ENCODE measurements at regions of chr1 and their contacts with region 1.

Region 1: DNA sequence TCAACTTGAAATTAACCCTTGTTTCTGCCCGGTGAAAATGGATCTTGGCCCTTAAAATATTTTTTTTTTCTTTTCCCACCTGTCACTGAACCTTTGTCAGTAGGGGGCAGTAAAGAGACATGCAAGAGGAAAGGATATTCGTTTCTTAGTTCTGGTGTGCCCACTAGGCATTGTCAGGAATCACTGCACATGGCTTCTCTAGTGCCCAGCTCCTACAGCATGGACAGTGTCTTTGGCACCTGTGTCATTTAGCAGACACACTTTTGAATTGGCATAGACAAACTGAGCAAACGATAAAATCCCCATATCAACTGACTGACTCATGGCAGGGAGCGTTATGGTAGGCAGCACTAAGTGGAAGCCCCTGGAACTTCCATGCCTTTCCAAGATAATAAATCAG is 1048.1 kb downstream of the BRINP3 start:
- DNase-seq: peak; percentile 71
- ATAC-seq: no peak
- H3K4me3 ChIP-seq: no peak overlapping the region
- H3K27ac ChIP-seq: no peak overlapping the region
- H3K4me1 ChIP-seq: peaks cover 3% of the 10 kb centered on the region
- H3K27me3 ChIP-seq: no peaks in the 10 kb centered on the region
- CTCF ChIP-seq: peak; percentile 69

Region 2: GRCh38 chr1:189275796-189276195 is 153.8 kb before region 1 on chr1:
- CTCF ChIA-PET with region 1: no interaction called
- POLR2A ChIA-PET with region 1: no interaction called
- intact Hi-C with region 1: no loop called
- DNase-seq: no peak
- ATAC-seq: no peak
- H3K4me3 ChIP-seq: no peak overlapping the region
- H3K27ac ChIP-seq: no peak overlapping the region
- H3K4me1 ChIP-seq: no peaks in the 10 kb centered on the region
- H3K27me3 ChIP-seq: no peaks in the 10 kb centered on the region
- CTCF ChIP-seq: no peak

Region 3: GRCh38 chr1:189463166-189463565 is 33.6 kb after region 1 on chr1:
- CTCF ChIA-PET with region 1: no interaction called
- POLR2A ChIA-PET with region 1: no interaction called
- intact Hi-C with region 1: no loop called
- DNase-seq: no peak
- ATAC-seq: no peak
- H3K4me3 ChIP-seq: no peak overlapping the region
- H3K27ac ChIP-seq: no peak overlapping the region
- H3K4me1 ChIP-seq: no peaks in the 10 kb centered on the region
- H3K27me3 ChIP-seq: no peaks in the 10 kb centered on the region
- CTCF ChIP-seq: no peak

Region 4: GRCh38 chr1:189606795-189607476 is 177.3 kb after region 1 on chr1:
- CTCF ChIA-PET with region 1: no interaction called
- POLR2A ChIA-PET with region 1: no interaction called
- intact Hi-C with region 1: loop called (anchors 5 kb)
- DNase-seq: peak; percentile 88
- ATAC-seq: peak; percentile 77
- H3K4me3 ChIP-seq: no peak overlapping the region
- H3K27ac ChIP-seq: peak overlapping the region; percentile 46
- H3K4me1 ChIP-seq: peaks cover 33% of the 10 kb centered on the region
- H3K27me3 ChIP-seq: no peaks in the 10 kb centered on the region
- CTCF ChIP-seq: no peak

Region 5: DNA sequence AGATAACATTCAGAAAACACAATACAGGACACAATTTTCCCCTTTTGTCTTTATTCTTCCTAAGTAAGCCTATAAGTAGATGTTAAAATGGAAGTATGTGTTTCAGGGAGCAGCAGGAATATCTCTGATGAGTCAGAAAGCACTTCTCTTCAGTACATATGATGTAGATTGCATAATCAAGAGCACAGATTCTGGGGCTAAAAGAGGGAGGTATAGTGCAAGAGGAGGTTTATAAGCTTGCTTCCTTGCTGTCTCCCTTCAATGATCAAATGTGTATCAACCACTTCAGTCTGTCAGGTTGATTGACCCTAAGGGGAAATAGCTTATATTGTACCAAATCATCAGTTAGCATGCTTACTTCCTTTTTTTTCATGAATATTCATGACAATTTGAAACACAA is 225.3 kb after region 1 on chr1:
- CTCF ChIA-PET with region 1: no interaction called
- POLR2A ChIA-PET with region 1: no interaction called
- intact Hi-C with region 1: no loop called
- DNase-seq: peak; percentile 38
- ATAC-seq: no peak
- H3K4me3 ChIP-seq: no peak overlapping the region
- H3K27ac ChIP-seq: no peak overlapping the region
- H3K4me1 ChIP-seq: peaks cover 29% of the 10 kb centered on the region
- H3K27me3 ChIP-seq: no peaks in the 10 kb centered on the region
- CTCF ChIP-seq: no peak

Region 6: GRCh38 chr1:189681252-189681973 is 251.8 kb after region 1 on chr1:
- CTCF ChIA-PET with region 1: no interaction called
- POLR2A ChIA-PET with region 1: interaction called, 4 read pairs
- intact Hi-C with region 1: loop called (anchors 5 kb)
- DNase-seq: no peak
- ATAC-seq: peak; percentile 60
- H3K4me3 ChIP-seq: no peak overlapping the region
- H3K27ac ChIP-seq: no peak overlapping the region
- H3K4me1 ChIP-seq: no peaks in the 10 kb centered on the region
- H3K27me3 ChIP-seq: no peaks in the 10 kb centered on the region
- CTCF ChIP-seq: no peak

Region 7: DNA sequence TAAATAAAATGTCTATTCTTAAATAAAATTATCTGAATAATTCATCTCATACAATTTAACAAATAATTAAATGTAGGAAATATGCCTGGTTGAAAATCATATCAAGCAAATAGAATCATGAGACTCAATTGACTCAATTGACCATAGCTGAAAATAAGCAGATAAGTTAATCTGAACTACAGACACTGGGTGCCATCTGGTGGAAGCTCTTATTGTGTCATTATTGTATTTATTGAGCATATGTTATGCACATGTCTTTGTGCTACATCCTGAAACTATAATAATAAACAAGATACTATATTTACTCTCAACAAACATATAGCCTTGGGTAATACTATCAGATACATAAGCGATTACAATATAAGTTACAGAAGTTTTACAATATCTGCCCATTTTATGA is 1007.0 kb after region 1 on chr1:
- CTCF ChIA-PET with region 1: no interaction called
- POLR2A ChIA-PET with region 1: no interaction called
- intact Hi-C with region 1: loop called (anchors 10 kb)
- DNase-seq: peak; percentile 69
- ATAC-seq: peak; percentile 67
- H3K4me3 ChIP-seq: no peak overlapping the region
- H3K27ac ChIP-seq: no peak overlapping the region
- H3K4me1 ChIP-seq: no peaks in the 10 kb centered on the region
- H3K27me3 ChIP-seq: no peaks in the 10 kb centered on the region
- CTCF ChIP-seq: peak; percentile 71

Measured in PC-3 (cell line).